Prostate gland (tissue), 2 donors: ENCODE measurements at regions of chr3 and their contacts with region 1.

Region 1: GRCh38 chr3:41198950-41199865 is at the start of gene CTNNB1:
- DNase-seq: peak; percentile 94
- H3K4me3 ChIP-seq: peak within 1 kb of the TSS; percentile 90 to 96
- H3K27ac ChIP-seq: peak within 1 kb of the TSS; percentile 97 to 99
- H3K4me1 ChIP-seq: no peaks in the 10 kb centered on the region
- H3K27me3 ChIP-seq: no peaks in the 10 kb centered on the region
- CTCF ChIP-seq: peak in 3 of 4 experiments; percentile 14 to 49 (median 30)
- POLR2A ChIP-seq: peak; percentile 90
- total RNA-seq, gene CTNNB1: 405 to 467 TPM

Region 2: GRCh38 chr3:40719660-40720287 is 479.4 kb before region 1 on chr3:
- intact Hi-C with region 1: loop called (anchors 10 kb)
- DNase-seq: peak; percentile 65
- H3K4me3 ChIP-seq: no peak overlapping the region
- H3K27ac ChIP-seq: no peak overlapping the region
- H3K4me1 ChIP-seq: no peaks in the 10 kb centered on the region
- H3K27me3 ChIP-seq: no peaks in the 10 kb centered on the region
- CTCF ChIP-seq: peak in 3 of 4 experiments; percentile 45 to 54 (median 48)
- POLR2A ChIP-seq: no peak

Region 3: GRCh38 chr3:41716471-41716870 is 517.3 kb after region 1 on chr3:
- intact Hi-C with region 1: loop called (anchors 10 kb)
- DNase-seq: no peak
- H3K4me3 ChIP-seq: no peak overlapping the region
- H3K27ac ChIP-seq: no peak overlapping the region
- H3K4me1 ChIP-seq: no peaks in the 10 kb centered on the region
- H3K27me3 ChIP-seq: no peaks in the 10 kb centered on the region
- CTCF ChIP-seq: peak in 3 of 4 experiments; percentile 28 to 50 (median 44)
- POLR2A ChIP-seq: no peak